ENCODE measurements at regions of chr12 and their contacts with region 1.

Region 1: GRCh38 chr12:51994959-51995358 is 11.8 kb upstream of the TAMALIN start:
- DNase-seq: no peak
- ATAC-seq: no peak

Region 2: GRCh38 chr12:51636581-51636980 is 358.4 kb before region 1 on chr12:
- intact Hi-C with region 1: no loop called
- DNase-seq: no peak
- ATAC-seq: no peak

Region 3: DNA sequence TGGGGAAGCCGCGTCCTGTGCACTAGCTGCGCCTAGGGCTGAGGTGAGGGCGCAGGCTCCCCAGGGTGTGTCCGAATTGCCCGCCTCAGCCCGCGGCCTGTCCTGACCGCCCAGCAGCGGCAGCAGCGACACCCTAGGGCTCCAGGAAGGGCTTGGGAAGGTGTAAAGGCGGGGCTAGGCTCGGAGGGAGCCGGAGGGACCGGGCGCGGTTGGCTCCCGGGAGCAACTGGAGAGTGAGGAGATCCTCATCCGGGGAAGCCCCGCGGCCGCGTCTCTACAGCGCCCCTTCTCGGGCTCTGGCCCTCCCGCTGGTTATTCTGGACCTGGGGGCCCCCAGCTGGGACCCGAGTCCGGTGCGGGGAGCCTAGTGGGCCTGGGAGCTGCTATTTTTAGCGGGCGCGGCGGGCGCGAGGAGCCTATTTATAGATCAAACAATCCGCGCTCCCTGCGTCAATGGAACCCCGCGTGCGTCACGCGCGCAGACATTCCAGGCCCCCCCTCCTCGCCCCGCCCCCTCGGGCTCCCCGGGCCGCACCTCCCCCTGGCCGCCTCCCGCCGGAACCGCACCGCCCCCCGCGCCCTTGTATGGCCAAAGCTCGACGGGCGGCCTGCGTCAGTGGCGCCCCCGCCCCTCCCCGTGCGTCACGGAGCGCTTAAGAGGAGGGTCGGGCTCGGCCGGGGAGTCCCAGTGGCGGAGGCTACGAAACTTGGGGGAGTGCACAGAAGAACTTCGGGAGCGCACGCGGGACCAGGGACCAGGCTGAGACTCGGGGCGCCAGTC is 56.0 kb after region 1 on chr12 and contains the start of gene NR4A1:
- intact Hi-C with region 1: no loop called
- DNase-seq: peak; percentile 99
- ATAC-seq: peak; percentile 91
- total RNA-seq, gene NR4A1: 40.6 TPM

Region 4: GRCh38 chr12:52082988-52083637 is 88.2 kb after region 1 on chr12:
- intact Hi-C with region 1: loop called (anchors 2 kb)
- DNase-seq: no peak
- ATAC-seq: peak; percentile 46

Measured in Right ventricle myocardium inferior (tissue), 1 donor.